ENCODE measurements at regions of chr1 and their contacts with region 1.

Region 1: GRCh38 chr1:152459596-152460528 is 45.8 kb upstream of the CRNN start:
- DNase-seq: peak; percentile 89
- H3K4me3 Mint-ChIP-seq: peak overlapping the region; percentile 39
- H3K27ac Mint-ChIP-seq: peak overlapping the region; percentile 75
- H3K4me1 Mint-ChIP-seq: peaks cover 23% of the 10 kb centered on the region
- H3K27me3 Mint-ChIP-seq: peaks cover 19% of the 10 kb centered on the region

Region 2: DNA sequence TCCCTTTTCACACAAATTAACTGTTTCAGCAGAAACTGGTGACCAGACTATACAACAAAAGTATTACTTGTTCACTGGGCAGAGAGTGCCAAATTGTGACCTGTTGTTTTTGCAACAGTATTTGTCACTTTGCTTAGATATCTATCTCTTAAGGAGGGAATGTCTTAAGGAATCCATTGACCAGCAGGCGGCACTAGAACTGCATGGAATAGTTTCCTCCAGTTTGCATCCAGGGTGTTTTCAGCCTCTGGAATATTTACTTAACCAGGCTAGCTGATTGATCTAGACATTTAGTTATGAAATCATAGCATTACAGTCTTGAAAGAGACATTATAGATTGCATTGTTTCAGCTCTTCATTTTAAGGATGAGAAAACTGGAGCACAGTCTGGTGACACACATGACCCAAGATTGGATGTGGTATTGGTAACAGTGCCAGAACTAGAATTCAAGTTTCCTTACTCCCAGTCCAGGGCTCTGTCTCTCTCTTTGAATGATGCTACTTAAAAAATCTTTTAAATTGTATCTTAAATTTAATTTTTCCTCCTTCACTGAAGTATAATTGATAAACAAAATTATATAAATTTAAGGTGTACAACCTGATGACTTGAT is 317.8 kb before region 1 on chr1:
- intact Hi-C with region 1: loop called (anchors 1 kb)
- DNase-seq: peak; percentile 57
- H3K4me3 Mint-ChIP-seq: no peak overlapping the region
- H3K27ac Mint-ChIP-seq: no peak overlapping the region
- H3K4me1 Mint-ChIP-seq: peaks cover 4% of the 10 kb centered on the region
- H3K27me3 Mint-ChIP-seq: peaks cover 35% of the 10 kb centered on the region

Region 3: GRCh38 chr1:152347116-152347728 is 112.6 kb before region 1 on chr1:
- intact Hi-C with region 1: loop called (anchors 1 kb)
- DNase-seq: peak; percentile 88
- H3K4me3 Mint-ChIP-seq: no peak overlapping the region
- H3K27ac Mint-ChIP-seq: no peak overlapping the region
- H3K4me1 Mint-ChIP-seq: no peaks in the 10 kb centered on the region
- H3K27me3 Mint-ChIP-seq: peaks cover 29% of the 10 kb centered on the region

Region 4: GRCh38 chr1:152398812-152399698 is 60.8 kb before region 1 on chr1:
- intact Hi-C with region 1: loop called (anchors 2 kb)
- DNase-seq: peak; percentile 62
- H3K4me3 Mint-ChIP-seq: no peak overlapping the region
- H3K27ac Mint-ChIP-seq: no peak overlapping the region
- H3K4me1 Mint-ChIP-seq: no peaks in the 10 kb centered on the region
- H3K27me3 Mint-ChIP-seq: peaks cover 16% of the 10 kb centered on the region

Region 5: DNA sequence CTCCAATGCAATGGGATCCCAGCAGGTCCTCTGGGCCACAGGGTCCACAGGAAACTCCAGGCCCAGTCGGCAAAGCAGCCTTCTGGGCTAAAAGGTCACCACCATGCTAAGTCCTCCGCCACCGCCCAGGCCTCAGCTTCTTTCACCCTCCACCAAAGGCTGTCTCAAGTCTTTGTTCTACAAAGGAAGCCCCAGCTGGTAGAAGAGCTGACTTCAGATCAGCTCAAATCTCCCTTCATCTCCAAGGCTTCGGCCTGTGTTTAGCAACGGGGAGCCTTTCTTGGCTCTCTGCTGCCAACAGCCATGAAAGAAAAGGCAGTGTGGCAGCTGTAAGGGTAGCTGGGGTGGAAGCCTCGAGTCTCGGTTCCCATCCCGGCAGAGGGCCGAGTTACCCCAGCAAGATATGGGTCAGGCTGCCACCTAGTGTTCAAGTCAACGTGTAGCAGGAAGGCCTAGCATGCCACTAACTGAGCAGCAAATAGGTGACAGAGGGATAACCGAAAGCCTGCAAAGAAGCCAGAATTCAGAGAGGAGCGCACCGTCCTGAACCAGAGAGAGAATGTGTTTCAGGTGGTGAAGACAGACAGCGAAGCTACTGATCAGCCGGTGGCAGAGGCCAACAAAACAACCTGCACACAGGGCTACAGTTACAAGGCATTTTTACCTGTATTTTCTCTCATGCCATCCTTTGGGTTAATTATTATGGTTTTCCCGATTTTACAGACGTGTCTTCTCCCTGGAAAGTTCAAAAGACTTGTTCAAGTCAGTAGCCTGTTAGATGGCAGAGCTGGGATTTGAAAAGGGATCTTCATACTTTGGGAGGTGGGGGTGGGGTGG is 19.0 kb before region 1 on chr1:
- intact Hi-C with region 1: no loop called
- DNase-seq: peak; percentile 89
- H3K4me3 Mint-ChIP-seq: no peak overlapping the region
- H3K27ac Mint-ChIP-seq: no peak overlapping the region
- H3K4me1 Mint-ChIP-seq: no peaks in the 10 kb centered on the region
- H3K27me3 Mint-ChIP-seq: peaks cover 22% of the 10 kb centered on the region

Region 6: GRCh38 chr1:152673016-152673415 is 213.2 kb after region 1 on chr1:
- intact Hi-C with region 1: no loop called
- DNase-seq: no peak
- H3K4me3 Mint-ChIP-seq: no peak overlapping the region
- H3K27ac Mint-ChIP-seq: no peak overlapping the region
- H3K4me1 Mint-ChIP-seq: no peaks in the 10 kb centered on the region
- H3K27me3 Mint-ChIP-seq: peaks cover 6% of the 10 kb centered on the region

Region 7: GRCh38 chr1:152768847-152769533 is 309.1 kb after region 1 on chr1:
- intact Hi-C with region 1: no loop called
- DNase-seq: peak; percentile 19
- H3K4me3 Mint-ChIP-seq: no peak overlapping the region
- H3K27ac Mint-ChIP-seq: no peak overlapping the region
- H3K4me1 Mint-ChIP-seq: no peaks in the 10 kb centered on the region
- H3K27me3 Mint-ChIP-seq: peaks cover 4% of the 10 kb centered on the region